Heart right ventricle (tissue), 16 donors: ENCODE measurements at regions of chr13 and their contacts with region 1.

Region 1: DNA sequence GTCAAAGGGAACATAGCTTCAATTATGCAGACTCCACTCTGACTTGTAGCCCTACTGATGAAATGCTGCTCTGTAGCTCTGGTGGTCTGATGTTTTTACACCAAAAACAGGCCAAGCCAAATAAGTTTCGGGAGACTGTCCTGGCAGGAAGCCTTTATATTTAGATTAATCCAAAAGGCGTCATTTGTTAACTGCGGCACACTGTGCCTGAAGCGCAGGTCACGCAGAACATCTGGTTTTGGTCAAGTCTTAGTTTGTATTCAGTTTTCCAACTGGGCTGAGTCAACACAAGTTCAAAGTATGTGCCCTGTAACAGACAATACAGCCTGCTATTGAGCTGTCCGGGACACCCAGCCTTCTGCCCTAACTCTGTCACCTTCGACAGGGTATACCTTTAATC is 154.6 kb upstream of the IPO5 start:
- DNase-seq: no peak
- ATAC-seq: no peak
- H3K4me3 ChIP-seq: no peak overlapping the region
- H3K27ac ChIP-seq: no peak overlapping the region
- H3K4me1 ChIP-seq: no peaks in the 10 kb centered on the region
- H3K27me3 ChIP-seq: no peaks in the 10 kb centered on the region
- CTCF ChIP-seq: no peak

Region 2: DNA sequence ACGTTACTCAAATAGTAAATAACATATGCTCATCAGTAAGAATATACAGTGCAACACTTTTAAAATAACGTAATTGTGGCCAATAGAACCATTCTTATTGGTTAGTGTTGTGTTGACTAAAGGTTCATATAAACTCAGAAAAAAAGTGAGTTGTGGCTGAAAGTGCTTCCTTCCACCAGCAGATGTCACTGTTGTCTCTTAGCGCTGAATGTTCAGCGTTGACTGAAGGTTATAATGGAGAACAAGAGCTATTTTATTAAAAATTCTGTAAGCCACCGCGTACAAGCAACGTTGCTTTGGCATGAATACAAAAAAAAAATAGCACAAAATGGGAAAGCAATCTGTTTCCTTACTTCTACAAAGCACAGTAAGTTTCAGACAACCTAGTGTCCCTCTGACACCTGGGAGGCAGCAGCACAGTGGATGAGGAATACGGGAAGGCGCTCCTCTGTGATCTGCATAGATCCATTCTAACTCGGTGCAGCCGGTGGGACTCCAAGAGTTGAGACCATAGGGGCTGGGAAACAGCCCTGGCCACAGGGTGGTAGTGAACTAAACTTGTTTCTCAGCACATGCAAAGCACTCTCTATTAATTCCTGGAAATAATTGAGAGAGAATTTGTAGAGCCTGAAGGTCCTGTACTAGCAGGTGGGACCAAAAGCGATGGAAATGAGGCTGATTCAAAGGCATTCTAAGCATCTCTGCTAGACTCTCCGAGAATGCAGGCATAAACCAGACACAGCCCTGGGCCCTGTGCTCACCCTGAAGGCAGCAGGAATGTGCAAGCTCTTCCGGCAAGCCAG is 780.6 kb before region 1 on chr13:
- intact Hi-C with region 1: loop called in 7 of 10 experiments (anchors 5 to 10 kb)
- DNase-seq: peak in 1 of 2 donors; percentile 37
- ATAC-seq: peak in 7 of 8 donors; percentile 47 to 70 (median 61)
- H3K4me3 ChIP-seq: no peak overlapping the region
- H3K27ac ChIP-seq: no peak overlapping the region
- H3K4me1 ChIP-seq: peaks cover 0 to 6% (median 0%) of the 10 kb centered on the region in 9 donors
- H3K27me3 ChIP-seq: peaks cover 0 to 46% (median 0%) of the 10 kb centered on the region in 7 donors
- CTCF ChIP-seq: peak; percentile 82 to 94 (median 89)

Region 3: DNA sequence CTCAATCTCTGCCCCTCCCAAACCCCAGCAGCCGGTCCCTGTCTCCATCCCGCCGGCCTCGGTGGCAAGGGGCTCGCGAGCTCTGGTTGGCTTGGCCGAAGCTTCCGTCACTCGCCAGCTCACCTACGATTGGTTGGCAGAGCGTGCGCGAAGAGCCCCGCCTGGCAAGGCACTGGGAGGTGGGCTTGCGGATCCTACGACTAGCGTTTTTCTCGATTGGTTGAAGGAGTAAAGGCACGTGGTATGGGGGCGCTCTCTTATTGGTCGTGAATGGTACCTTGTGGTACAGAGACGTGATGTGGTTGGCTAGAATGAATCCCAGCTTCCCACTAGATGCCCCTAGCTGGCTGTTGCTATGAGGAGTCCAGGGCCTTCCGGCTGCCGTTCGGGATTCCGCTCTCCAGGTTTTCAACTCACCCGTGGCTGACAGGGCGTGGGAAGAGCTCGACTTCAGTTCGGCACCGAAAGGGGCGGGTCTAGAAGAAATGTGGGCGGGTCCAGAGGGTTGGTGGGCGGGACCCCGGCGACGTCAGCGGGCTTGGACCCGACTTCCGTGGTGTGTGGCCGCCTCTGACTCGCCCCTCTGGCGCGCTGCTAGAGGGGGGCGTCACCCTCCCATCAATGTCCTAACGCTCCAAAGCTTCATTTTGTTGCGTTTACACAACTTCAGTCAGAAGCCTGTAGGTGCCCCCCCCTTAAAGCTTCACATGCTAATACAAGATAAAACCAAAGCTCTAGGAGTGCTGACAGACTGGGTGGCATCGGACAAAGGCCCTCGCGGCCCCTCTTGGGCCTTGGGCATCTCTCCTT is 365.7 kb before region 1 on chr13:
- intact Hi-C with region 1: loop called in 2 of 10 experiments (anchors 5 kb)
- DNase-seq: peak; percentile 98 to 99
- ATAC-seq: peak; percentile 91 to 98 (median 94)
- H3K4me3 ChIP-seq: peak overlapping the region; percentile 66 to 98 (median 84)
- H3K27ac ChIP-seq: peak overlapping the region; percentile 95 to 100 (median 99)
- H3K4me1 ChIP-seq: peaks cover 0 to 54% (median 37%) of the 10 kb centered on the region in 9 donors
- H3K27me3 ChIP-seq: no peaks in the 10 kb centered on the region
- CTCF ChIP-seq: no peak

Region 4: DNA sequence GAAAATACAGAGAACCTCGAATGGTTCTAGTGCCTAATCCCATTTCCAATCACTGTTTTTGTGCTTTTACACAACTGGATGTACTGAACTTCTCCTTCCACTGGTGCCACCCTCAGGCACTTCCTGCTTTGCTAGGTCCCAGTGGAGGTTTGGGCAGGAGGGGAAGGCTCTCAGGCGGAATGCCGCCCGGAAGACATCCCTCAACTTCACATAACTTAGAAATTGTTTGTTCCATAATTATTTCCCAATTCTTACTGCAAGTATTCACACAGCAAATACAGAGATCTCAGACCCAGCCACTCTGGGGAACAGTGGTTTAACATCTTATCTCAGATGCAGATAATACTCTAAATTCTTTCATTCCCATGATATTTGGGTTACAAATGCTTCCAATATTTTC is 41.0 kb before region 1 on chr13:
- intact Hi-C with region 1: loop called in 1 of 10 experiments (anchors 5 kb)
- DNase-seq: peak in 1 of 2 donors; percentile 29
- ATAC-seq: peak; percentile 64 to 87 (median 84)
- H3K4me3 ChIP-seq: no peak overlapping the region
- H3K27ac ChIP-seq: peak overlapping the region in 4 of 10 donors; percentile 20 to 55 (median 40)
- H3K4me1 ChIP-seq: peaks cover 0 to 8% (median 0%) of the 10 kb centered on the region in 9 donors
- H3K27me3 ChIP-seq: peaks cover 0 to 3% (median 0%) of the 10 kb centered on the region in 7 donors
- CTCF ChIP-seq: no peak

Region 5: DNA sequence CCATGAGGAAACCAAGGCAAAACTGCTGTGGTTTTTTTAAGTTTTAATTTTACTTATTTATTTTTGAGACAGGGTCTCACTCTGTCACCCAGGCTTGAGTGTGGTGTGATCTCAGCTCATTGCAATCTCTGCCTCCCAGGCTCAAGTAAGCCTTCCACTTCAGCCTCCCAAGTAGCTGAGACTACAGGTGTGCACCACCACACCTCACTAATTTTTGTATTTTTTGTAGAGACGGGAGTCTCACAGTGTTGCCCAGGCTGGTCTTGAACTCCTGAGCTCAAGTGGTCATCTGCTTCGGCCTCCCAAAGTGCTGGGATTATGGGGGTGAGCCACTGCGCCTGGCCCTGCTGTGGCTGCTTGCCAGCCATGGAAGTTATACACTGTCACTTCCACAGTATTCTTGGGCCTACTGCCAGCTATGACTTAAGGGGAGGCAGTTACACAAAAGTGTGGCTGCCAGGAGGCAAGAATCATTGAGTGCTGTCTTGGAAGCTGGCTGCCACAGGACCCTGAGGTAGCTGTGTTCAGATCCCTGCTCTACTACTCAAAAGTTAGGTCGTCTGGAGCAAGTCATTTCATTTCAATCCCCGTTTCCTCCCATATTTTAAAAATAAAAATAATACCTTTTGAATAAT is 356.8 kb after region 1 on chr13:
- intact Hi-C with region 1: no loop called
- DNase-seq: peak in 1 of 2 donors; percentile 19
- ATAC-seq: peak in 1 of 8 donors; percentile 42
- H3K4me3 ChIP-seq: no peak overlapping the region
- H3K27ac ChIP-seq: no peak overlapping the region
- H3K4me1 ChIP-seq: peaks cover 0 to 11% (median 0%) of the 10 kb centered on the region in 9 donors
- H3K27me3 ChIP-seq: no peaks in the 10 kb centered on the region
- CTCF ChIP-seq: no peak

Region 6: GRCh38 chr13:98570929-98571372 is 772.1 kb after region 1 on chr13:
- intact Hi-C with region 1: no loop called
- DNase-seq: no peak
- ATAC-seq: peak in 6 of 8 donors; percentile 26 to 60 (median 54)
- H3K4me3 ChIP-seq: peak overlapping the region in 6 of 10 donors; percentile 5 to 44 (median 30)
- H3K27ac ChIP-seq: peak overlapping the region in 9 of 10 donors; percentile 6 to 78 (median 42)
- H3K4me1 ChIP-seq: peaks cover 7 to 100% (median 67%) of the 10 kb centered on the region in 9 donors
- H3K27me3 ChIP-seq: no peaks in the 10 kb centered on the region
- CTCF ChIP-seq: no peak